PC-3 (cell line): ENCODE measurements at regions of chr9 and their contacts with region 1.

Region 1: GRCh38 chr9:111743275-111743674 is 51.5 kb downstream of the SHOC1 start:
- DNase-seq: peak; percentile 88
- ATAC-seq: peak; percentile 100
- H3K4me3 ChIP-seq: peak overlapping the region; percentile 10; the same call in 1 of the 2 replicates
- H3K27ac ChIP-seq: peak overlapping the region; percentile 64
- H3K4me1 ChIP-seq: peaks cover 25% of the 10 kb centered on the region
- H3K27me3 ChIP-seq: no peaks in the 10 kb centered on the region
- CTCF ChIP-seq: no peak

Region 2: GRCh38 chr9:111597817-111598729 is 145.2 kb before region 1 on chr9:
- CTCF ChIA-PET with region 1: no interaction called
- POLR2A ChIA-PET with region 1: no interaction called
- intact Hi-C with region 1: no loop called
- DNase-seq: peak; percentile 61
- ATAC-seq: peak; percentile 31
- H3K4me3 ChIP-seq: peak overlapping the region; percentile 80
- H3K27ac ChIP-seq: peak overlapping the region; percentile 43; the same call in 1 of the 2 replicates
- H3K4me1 ChIP-seq: peaks cover 16% of the 10 kb centered on the region
- H3K27me3 ChIP-seq: no peaks in the 10 kb centered on the region
- CTCF ChIP-seq: peak; percentile 73

Region 3: GRCh38 chr9:111728621-111729366 is 14.5 kb before region 1 on chr9:
- CTCF ChIA-PET with region 1: no interaction called
- POLR2A ChIA-PET with region 1: no interaction called
- intact Hi-C with region 1: loop called (anchors 2 kb)
- DNase-seq: peak; percentile 93
- ATAC-seq: peak; percentile 88
- H3K4me3 ChIP-seq: peak overlapping the region; percentile 58
- H3K27ac ChIP-seq: peak overlapping the region; percentile 97
- H3K4me1 ChIP-seq: peaks cover 36% of the 10 kb centered on the region
- H3K27me3 ChIP-seq: no peaks in the 10 kb centered on the region
- CTCF ChIP-seq: no peak